ENCODE measurements at regions of chr1 and their contacts with region 1.

Region 1: DNA sequence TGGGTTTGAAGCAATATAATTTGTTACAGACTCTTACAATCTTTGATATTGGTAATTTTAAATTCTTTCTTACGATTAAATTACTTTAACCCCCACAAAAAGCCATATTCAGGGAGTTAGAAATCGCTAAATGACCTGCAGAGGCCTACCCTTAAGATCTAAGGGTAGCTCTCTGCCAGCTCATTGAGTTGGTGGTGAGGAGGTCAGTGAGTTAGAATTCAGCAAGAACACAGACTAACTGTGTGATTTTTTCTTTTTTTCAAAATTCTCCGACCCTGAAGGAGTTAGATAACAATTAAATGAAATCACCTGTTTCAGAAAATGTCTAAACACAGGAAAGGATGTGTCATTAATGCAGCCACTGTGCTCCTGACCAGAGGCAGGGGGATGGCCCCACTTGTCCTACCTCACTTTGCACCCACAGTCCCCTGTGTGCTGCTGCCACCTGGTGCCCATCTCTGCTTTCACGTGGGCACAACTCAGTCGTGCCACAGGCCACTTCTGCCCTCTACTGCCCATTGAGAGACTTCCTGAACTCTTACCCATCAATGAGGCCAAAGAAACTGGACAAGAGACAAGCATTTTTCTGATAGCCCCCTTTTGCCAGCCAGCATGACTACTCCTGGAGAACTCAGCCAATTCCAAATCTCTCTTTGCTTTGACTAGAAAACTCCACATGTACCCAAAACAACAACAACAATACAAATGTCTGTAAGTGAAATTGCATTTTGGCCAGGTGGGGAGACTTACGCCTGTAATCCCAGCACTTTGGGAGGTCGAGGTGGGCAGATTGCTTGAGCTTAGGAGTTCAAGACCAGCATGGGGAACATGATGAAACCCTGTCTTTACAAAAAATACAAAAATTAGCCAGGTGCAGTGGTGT is 8.4 kb downstream of the CFAP45 start:
- DNase-seq: peak; percentile 89
- H3K4me3 ChIP-seq: no peak overlapping the region
- H3K27ac ChIP-seq: no peak overlapping the region
- H3K4me1 ChIP-seq: peaks cover 38% of the 10 kb centered on the region
- H3K27me3 ChIP-seq: no peaks in the 10 kb centered on the region
- CTCF ChIP-seq: peak; percentile 98

Region 2: DNA sequence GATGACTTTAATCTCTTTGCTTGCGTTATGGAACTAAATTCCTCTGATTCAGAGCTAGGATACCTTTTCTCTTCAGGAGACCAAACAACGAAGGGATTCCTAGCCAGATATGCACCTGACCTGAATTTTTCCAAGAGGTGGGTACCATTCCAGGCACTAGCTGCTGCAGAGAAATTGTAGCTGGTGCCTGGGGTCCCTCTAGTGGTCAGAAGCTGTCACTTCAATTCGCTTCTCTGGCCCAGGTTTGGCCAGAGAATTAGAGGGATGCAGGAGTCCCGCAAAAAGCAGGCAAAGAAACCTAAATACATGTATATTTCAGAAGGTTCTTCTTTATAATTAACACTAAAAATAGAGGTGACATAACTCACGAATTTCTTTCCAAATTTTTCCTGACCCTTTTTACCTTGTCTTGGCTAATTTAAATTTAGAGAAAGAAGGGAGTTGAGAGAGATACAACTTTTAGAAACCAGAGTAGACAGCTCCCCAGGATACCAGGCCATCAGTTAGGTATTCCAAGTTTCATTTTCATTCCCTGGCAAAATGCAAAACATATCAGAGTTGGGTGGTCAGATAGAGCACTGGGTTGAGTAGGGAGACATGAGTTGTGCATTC is 677.3 kb before region 1 on chr1:
- CTCF ChIA-PET with region 1: interaction called, 3 read pairs
- POLR2A ChIA-PET with region 1: no interaction called
- intact Hi-C with region 1: loop called (anchors 2 kb)
- DNase-seq: peak; percentile 49
- H3K4me3 ChIP-seq: no peak overlapping the region
- H3K27ac ChIP-seq: no peak overlapping the region
- H3K4me1 ChIP-seq: no peaks in the 10 kb centered on the region
- H3K27me3 ChIP-seq: peaks cover 51% of the 10 kb centered on the region
- CTCF ChIP-seq: peak; percentile 88

Region 3: GRCh38 chr1:159421821-159422220 is 469.7 kb before region 1 on chr1:
- CTCF ChIA-PET with region 1: no interaction called
- POLR2A ChIA-PET with region 1: no interaction called
- intact Hi-C with region 1: loop called (anchors 5 kb)
- DNase-seq: no peak
- H3K4me3 ChIP-seq: no peak overlapping the region
- H3K27ac ChIP-seq: no peak overlapping the region
- H3K4me1 ChIP-seq: no peaks in the 10 kb centered on the region
- H3K27me3 ChIP-seq: peaks cover 18% of the 10 kb centered on the region
- CTCF ChIP-seq: peak; percentile 46; the same call in 1 of the 2 replicates

Region 4: DNA sequence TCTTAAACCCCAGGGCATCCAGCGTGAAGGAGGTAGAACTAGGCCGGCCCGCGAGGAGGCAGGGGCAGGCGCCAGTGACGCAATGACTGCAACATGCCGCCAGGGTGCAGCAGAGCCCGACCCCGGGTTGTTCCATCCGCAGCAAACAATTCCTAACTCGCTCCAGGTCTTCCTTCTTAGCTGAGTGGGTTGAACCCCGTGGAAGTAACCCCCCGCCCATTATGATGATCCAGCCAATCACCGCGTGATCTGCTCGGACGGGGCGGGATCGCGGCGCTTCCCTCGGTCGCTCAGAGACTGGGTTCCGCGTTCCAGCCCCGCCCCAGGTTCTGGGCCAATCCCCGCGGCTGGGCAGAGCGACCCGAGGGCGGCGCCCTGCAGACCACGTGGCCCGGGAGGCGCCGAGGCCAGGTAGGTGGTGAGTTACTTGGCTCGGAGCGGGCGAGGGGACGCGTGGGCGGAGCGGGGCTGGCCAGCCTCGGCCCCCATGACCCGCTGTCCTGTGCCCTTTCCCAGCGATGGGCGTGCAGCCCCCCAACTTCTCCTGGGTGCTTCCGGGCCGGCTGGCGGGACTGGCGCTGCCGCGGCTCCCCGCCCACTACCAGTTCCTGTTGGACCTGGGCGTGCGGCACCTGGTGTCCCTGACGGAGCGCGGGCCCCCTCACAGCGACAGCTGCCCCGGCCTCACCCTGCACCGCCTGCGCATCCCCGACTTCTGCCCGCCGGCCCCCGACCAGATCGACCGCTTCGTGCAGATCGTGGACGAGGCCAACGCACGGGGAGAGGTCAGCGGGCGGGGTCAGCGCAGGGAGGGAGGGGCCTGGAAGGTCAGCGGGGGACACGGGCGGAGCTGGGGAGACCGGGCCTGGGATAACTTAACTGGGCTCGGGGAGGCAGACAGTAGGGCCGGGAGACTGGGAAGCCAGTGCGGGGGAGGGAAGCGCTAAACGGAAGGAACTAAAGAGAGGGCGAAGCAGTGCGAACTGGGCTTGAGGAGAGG is 110.6 kb before region 1 on chr1 and contains the start of gene DUSP23:
- CTCF ChIA-PET with region 1: interaction called, 35 read pairs
- POLR2A ChIA-PET with region 1: no interaction called
- intact Hi-C with region 1: loop called (anchors 1 kb)
- DNase-seq: peak; percentile 98
- H3K4me3 ChIP-seq: peak within 1 kb of the TSS; percentile 57
- H3K27ac ChIP-seq: peak within 1 kb of the TSS; percentile 26
- H3K4me1 ChIP-seq: no peaks in the 10 kb centered on the region
- H3K27me3 ChIP-seq: no peaks in the 10 kb centered on the region
- CTCF ChIP-seq: peak; percentile 95
- total RNA-seq, gene DUSP23: 27.9 and 31.0 TPM in 2 replicates

Region 5: DNA sequence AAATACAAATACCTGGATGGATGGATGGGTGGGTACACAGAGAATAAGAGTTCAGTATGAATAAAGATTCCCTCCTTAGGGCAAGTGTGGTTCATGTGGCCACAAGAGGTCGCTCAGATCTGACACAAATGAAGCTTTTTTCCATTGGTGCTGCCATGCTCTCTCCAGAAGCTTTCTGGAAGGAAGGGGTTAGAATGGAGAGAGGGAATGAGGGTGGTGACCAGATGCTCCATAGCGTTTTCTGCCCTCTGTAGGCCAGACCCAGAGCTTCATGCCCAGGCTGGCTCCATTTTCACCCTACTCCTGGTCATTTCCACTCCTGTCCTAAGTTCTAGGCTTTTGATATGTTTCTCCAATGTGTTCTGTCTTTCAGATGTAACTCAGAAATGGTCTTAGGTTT is 92.6 kb before region 1 on chr1:
- CTCF ChIA-PET with region 1: interaction called, 107 read pairs
- POLR2A ChIA-PET with region 1: no interaction called
- intact Hi-C with region 1: loop called (anchors 1 kb)
- DNase-seq: peak; percentile 90
- H3K4me3 ChIP-seq: no peak overlapping the region
- H3K27ac ChIP-seq: no peak overlapping the region
- H3K4me1 ChIP-seq: no peaks in the 10 kb centered on the region
- H3K27me3 ChIP-seq: peaks cover 7% of the 10 kb centered on the region
- CTCF ChIP-seq: peak; percentile 88

Region 6: DNA sequence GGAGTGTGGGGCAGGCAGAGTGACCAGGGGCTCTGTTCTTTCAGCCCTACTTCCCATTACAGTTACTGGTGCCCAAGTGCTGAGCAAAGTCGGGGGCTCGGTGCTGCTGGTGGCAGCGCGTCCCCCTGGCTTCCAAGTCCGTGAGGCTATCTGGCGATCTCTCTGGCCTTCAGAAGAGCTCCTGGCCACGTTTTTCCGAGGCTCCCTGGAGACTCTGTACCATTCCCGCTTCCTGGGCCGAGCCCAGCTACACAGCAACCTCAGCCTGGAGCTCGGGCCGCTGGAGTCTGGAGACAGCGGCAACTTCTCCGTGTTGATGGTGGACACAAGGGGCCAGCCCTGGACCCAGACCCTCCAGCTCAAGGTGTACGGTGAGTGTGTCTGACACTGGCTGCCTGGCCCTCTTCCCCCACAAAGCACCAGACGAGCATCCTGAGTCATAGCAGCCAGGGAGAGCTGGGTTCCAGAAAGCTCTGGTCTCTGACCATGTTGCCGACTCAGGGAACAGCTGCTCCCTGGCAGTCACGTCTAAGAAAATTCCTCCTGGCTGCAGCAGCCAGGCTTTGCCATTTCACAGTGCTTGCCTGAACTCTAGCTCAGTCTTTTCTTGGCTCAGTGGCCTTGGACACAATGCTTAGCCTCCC is 61.6 kb before region 1 on chr1:
- CTCF ChIA-PET with region 1: interaction called, 3 read pairs
- POLR2A ChIA-PET with region 1: no interaction called
- intact Hi-C with region 1: loop called (anchors 2 kb)
- DNase-seq: no peak
- H3K4me3 ChIP-seq: no peak overlapping the region
- H3K27ac ChIP-seq: no peak overlapping the region
- H3K4me1 ChIP-seq: peaks cover 19% of the 10 kb centered on the region
- H3K27me3 ChIP-seq: no peaks in the 10 kb centered on the region
- CTCF ChIP-seq: no peak

Region 7: DNA sequence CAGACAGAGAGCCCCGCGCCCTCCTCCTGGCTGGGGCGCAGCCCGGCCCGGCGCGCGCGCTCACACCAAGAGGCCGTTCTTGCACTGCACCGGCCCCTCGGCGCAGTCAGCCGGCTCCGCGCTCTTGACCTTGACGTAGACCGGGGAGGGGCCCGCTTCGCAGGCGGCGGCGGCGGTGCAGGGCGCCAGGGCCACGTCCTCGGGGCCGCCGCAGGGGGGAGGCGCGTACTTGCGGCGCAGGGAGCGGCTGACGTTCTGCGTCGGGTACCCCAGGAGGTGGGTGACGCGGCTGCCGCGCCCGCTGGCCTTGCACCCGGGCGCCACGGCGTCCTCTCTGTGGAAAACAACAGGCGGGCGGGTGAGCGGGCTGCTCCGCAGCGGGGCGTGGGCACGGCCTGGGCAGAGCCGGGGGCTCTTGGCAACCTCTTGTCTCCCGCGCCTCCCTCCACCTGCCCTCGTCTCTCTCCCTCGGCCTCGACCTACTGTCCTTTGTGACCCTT is 36.8 kb before region 1 on chr1:
- CTCF ChIA-PET with region 1: no interaction called
- POLR2A ChIA-PET with region 1: no interaction called
- intact Hi-C with region 1: no loop called
- DNase-seq: peak; percentile 75
- H3K4me3 ChIP-seq: peak overlapping the region; percentile 60
- H3K27ac ChIP-seq: peak overlapping the region; percentile 74
- H3K4me1 ChIP-seq: peaks cover 9% of the 10 kb centered on the region
- H3K27me3 ChIP-seq: no peaks in the 10 kb centered on the region
- CTCF ChIP-seq: no peak

Region 8: DNA sequence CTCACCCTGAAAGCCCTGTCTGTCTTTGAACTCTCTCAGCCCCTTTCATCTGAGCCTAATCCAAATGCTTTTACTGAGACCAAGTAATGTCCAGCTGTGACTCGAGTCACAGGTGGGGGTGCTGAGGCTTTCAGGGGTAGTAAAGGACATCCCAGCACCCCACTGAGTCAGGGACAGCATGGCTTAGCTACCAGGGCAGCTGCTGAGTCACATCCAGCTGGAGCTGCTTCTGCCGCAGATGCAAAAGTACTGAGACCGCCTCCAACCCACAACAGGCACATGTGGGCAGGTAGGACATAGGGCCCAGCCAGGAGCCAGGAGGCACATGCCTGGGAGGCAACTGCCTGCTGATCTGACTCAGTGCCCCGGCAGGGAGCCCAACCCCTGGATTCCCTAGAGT is 22.3 kb before region 1 on chr1:
- CTCF ChIA-PET with region 1: no interaction called
- POLR2A ChIA-PET with region 1: no interaction called
- intact Hi-C with region 1: no loop called
- DNase-seq: no peak
- H3K4me3 ChIP-seq: no peak overlapping the region
- H3K27ac ChIP-seq: no peak overlapping the region
- H3K4me1 ChIP-seq: peaks cover 8% of the 10 kb centered on the region
- H3K27me3 ChIP-seq: no peaks in the 10 kb centered on the region
- CTCF ChIP-seq: no peak

Region 9: GRCh38 chr1:159924981-159925712 is 33.6 kb after region 1 on chr1 and contains the start of gene TAGLN2:
- CTCF ChIA-PET with region 1: no interaction called
- POLR2A ChIA-PET with region 1: no interaction called
- intact Hi-C with region 1: no loop called
- DNase-seq: peak; percentile 90
- H3K4me3 ChIP-seq: peak within 1 kb of the TSS; percentile 78
- H3K27ac ChIP-seq: peak within 1 kb of the TSS; percentile 76
- H3K4me1 ChIP-seq: peaks cover 19% of the 10 kb centered on the region
- H3K27me3 ChIP-seq: no peaks in the 10 kb centered on the region
- CTCF ChIP-seq: no peak
- total RNA-seq, gene TAGLN2: 155 and 198 TPM in 2 replicates